ENCODE measurements at regions of chr3 and their contacts with region 1.

Region 1: GRCh38 chr3:114418724-114419543 is 125.1 kb downstream of the TIGIT start:
- DNase-seq: no peak
- ATAC-seq: peak; percentile 74

Region 2: DNA sequence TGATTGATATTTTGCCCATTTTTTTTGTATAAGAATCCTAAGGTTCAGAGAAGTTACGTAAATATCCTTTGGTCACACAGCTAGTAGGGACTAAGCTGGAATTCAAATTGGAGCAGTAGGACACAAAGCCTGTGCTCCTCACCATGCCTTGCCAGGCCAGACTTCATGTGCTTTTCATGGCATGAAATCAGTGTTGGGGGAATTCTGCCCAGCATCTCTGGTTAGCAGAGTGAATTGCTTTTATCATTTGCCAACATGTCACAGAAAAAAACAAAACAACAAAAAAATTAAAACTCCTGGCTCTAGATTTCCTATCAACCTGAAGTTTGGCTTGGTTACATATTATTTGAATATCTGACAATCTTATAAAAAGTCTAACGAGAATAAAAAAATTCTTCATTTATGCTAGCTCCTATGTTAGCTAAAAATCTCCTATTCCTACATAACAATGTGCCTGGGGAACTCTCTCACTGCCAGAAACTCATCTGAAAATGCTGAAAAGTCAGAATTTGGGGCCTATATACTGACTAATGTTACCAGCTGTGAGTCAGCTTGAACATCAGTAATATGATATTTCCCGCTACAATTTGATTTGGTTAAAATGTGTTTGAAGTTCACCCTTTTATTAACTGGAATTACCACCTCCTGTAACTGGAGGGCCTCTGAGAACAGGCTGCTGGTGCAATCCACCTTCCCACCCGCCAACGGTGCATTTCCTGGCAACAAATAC is 16.6 kb after region 1 on chr3:
- intact Hi-C with region 1: loop called (anchors 2 kb)
- DNase-seq: no peak
- ATAC-seq: no peak

Region 3: GRCh38 chr3:114454551-114455251 is 35.8 kb after region 1 on chr3:
- intact Hi-C with region 1: loop called (anchors 5 kb)
- DNase-seq: no peak
- ATAC-seq: peak; percentile 23

Region 4: GRCh38 chr3:114756506-114757279 is 337.8 kb after region 1 on chr3:
- intact Hi-C with region 1: loop called (anchors 10 kb)
- DNase-seq: no peak
- ATAC-seq: peak; percentile 72

Measured in Right ventricle myocardium inferior (tissue), 1 donor.